ENCODE measurements at regions of chr14 and their contacts with region 1.

Region 1: DNA sequence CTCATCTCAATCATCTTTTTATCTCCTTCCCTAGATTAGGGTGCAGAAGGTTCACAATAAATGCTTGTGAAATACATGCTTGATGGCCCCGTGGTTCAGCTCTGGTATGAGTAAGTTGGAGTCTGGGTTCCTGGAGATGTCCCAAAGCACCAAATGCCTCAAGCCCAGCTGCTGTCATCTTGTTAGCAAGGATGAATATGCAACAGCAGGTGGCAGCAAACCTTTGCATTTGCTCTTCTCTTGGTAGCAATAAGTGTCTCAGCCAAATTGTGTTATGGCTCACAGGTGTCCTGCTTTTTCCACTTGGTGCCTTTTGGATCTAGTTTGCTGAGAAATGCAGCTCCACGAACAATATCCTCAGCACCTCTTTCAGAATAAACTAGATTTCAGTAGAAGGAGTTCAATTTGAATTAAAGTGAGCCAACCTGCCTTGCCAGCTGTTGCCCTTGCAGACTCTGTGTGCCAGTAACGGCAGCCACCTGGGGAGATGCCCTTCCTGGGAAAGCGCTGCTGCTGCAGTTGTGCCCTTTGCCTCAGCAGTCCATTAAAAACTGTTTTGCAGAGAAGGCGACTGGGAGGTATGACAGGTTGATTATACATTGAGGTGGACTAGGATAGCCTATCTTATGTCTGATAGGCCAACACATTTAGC is 417.3 kb downstream of the SNAPC1 start:
- DNase-seq: peak; percentile 63
- ATAC-seq: no peak
- H3K4me3 Mint-ChIP-seq: no peak overlapping the region
- H3K27ac Mint-ChIP-seq: no peak overlapping the region
- H3K4me1 Mint-ChIP-seq: no peaks in the 10 kb centered on the region
- H3K27me3 Mint-ChIP-seq: peaks cover 19% of the 10 kb centered on the region

Region 2: GRCh38 chr14:61076556-61076955 is 1102.9 kb before region 1 on chr14:
- CTCF ChIA-PET with region 1: no interaction called
- POLR2A ChIA-PET with region 1: no interaction called
- intact Hi-C with region 1: loop called in 1 of 2 experiments (anchors 5 kb)
- DNase-seq: no peak
- ATAC-seq: no peak
- H3K4me3 Mint-ChIP-seq: no peak overlapping the region
- H3K27ac Mint-ChIP-seq: no peak overlapping the region
- H3K4me1 Mint-ChIP-seq: no peaks in the 10 kb centered on the region
- H3K27me3 Mint-ChIP-seq: no peaks in the 10 kb centered on the region